AG04449 (cell line): ENCODE measurements at regions of chr3 and their contacts with region 1.

Region 1: GRCh38 chr3:138915503-138916498 is 31.1 kb downstream of the FOXL2 start:
- DNase-seq: no peak
- H3K4me3 ChIP-seq: peak overlapping the region; percentile 89
- CTCF ChIP-seq: peak; percentile 89

Region 2: DNA sequence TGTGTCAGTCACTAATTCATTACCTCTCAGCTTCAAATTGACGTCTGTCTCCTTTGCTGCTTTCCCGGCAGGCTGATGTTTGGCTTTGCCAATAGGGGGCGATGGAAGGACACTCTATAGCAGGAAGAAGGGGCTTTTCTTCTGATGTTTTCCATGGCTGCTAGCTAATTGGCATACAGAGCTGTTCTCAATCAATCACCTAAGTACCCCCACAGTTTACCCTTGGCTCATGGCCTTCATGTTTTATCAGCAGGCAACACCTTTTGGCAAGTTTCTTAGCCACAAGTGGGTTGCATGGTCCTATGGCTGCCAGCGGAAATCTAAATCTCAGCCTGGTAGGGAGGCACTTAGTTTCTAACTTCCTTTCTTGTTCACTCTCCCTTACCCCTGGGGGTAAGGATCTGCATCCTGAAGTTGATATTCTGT is 436.4 kb before region 1 on chr3:
- CTCF ChIA-PET with region 1: interaction called, 89 read pairs
- POLR2A ChIA-PET with region 1: no interaction called
- DNase-seq: no peak
- H3K4me3 ChIP-seq: no peak overlapping the region
- CTCF ChIP-seq: peak; percentile 90

Region 3: GRCh38 chr3:138653567-138653966 is 262.2 kb before region 1 on chr3:
- CTCF ChIA-PET with region 1: interaction called, 11 read pairs
- POLR2A ChIA-PET with region 1: no interaction called
- DNase-seq: no peak
- H3K4me3 ChIP-seq: no peak overlapping the region
- CTCF ChIP-seq: no peak

Region 4: DNA sequence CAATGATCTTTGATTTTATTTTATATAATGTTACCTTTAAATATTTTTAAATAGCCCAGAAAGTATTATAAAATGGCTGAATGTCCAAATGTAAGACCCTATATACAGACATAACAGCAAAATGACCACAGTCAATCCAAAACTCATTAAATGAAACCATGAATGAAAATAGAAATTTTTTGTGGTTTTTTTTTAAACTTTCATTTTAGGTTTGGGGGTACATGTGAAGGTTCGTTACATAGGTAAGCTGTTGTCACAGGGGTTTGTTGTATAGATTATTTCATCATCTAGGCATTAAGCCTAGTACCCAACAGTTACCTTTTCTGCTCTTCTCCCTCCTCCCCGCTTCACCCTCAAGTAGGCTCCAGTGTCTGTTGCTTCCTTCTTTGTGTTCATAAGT is 198.5 kb before region 1 on chr3:
- CTCF ChIA-PET with region 1: interaction called, 58 read pairs
- POLR2A ChIA-PET with region 1: no interaction called
- DNase-seq: no peak
- H3K4me3 ChIP-seq: no peak overlapping the region
- CTCF ChIP-seq: no peak

Region 5: GRCh38 chr3:138824114-138824506 is 91.7 kb before region 1 on chr3:
- CTCF ChIA-PET with region 1: interaction called, 17 read pairs
- POLR2A ChIA-PET with region 1: no interaction called
- DNase-seq: no peak
- H3K4me3 ChIP-seq: no peak overlapping the region
- CTCF ChIP-seq: no peak

Region 6: GRCh38 chr3:138890555-138891187 is 25.1 kb before region 1 on chr3:
- CTCF ChIA-PET with region 1: interaction called, 19 read pairs
- POLR2A ChIA-PET with region 1: no interaction called
- DNase-seq: no peak
- H3K4me3 ChIP-seq: no peak overlapping the region
- CTCF ChIP-seq: no peak